ENCODE measurements at regions of chr11 and their contacts with region 1.

Region 1: GRCh38 chr11:126904520-126904919 is 96.0 kb downstream of the KIRREL3 start:
- DNase-seq: no peak
- ATAC-seq: no peak
- H3K4me3 ChIP-seq: no peak overlapping the region
- H3K4me3 Mint-ChIP-seq: no peak overlapping the region
- H3K27ac ChIP-seq: no peak overlapping the region
- H3K27ac Mint-ChIP-seq: no peak overlapping the region
- H3K4me1 ChIP-seq: no peaks in the 10 kb centered on the region
- H3K4me1 Mint-ChIP-seq: no peaks in the 10 kb centered on the region
- H3K27me3 ChIP-seq: peaks cover 0 to 3% of the 10 kb centered on the region in 2 experiments
- H3K27me3 Mint-ChIP-seq: peaks cover 0 to 7% of the 10 kb centered on the region in 2 donors

Region 2: GRCh38 chr11:126891556-126892217 is 12.8 kb before region 1 on chr11:
- CTCF ChIA-PET with region 1: no interaction called
- POLR2A ChIA-PET with region 1: interaction called in 1 of 2 experiments, 13 read pairs
- DNase-seq: no peak
- ATAC-seq: no peak
- H3K4me3 ChIP-seq: no peak overlapping the region
- H3K4me3 Mint-ChIP-seq: no peak overlapping the region
- H3K27ac ChIP-seq: no peak overlapping the region
- H3K27ac Mint-ChIP-seq: no peak overlapping the region
- H3K4me1 ChIP-seq: no peaks in the 10 kb centered on the region
- H3K4me1 Mint-ChIP-seq: no peaks in the 10 kb centered on the region
- H3K27me3 ChIP-seq: peaks cover 0 to 5% of the 10 kb centered on the region in 2 experiments
- H3K27me3 Mint-ChIP-seq: peaks cover 8 to 11% of the 10 kb centered on the region in 2 donors